OCI-LY7 (cell line): ENCODE measurements at regions of chr4 and their contacts with region 1.

Region 1: GRCh38 chr4:177250056-177250696 is 59.5 kb upstream of the NEIL3 start:
- DNase-seq: peak; percentile 54
- H3K4me3 ChIP-seq: no peak overlapping the region
- H3K27ac ChIP-seq: no peak overlapping the region
- H3K4me1 ChIP-seq: no peaks in the 10 kb centered on the region
- CTCF ChIP-seq: peak; percentile 90

Region 2: GRCh38 chr4:176875446-176875930 is 374.7 kb before region 1 on chr4:
- CTCF ChIA-PET with region 1: no interaction called
- POLR2A ChIA-PET with region 1: no interaction called
- intact Hi-C with region 1: no loop called
- DNase-seq: no peak
- H3K4me3 ChIP-seq: no peak overlapping the region
- H3K27ac ChIP-seq: no peak overlapping the region
- H3K4me1 ChIP-seq: no peaks in the 10 kb centered on the region
- CTCF ChIP-seq: no peak

Region 3: GRCh38 chr4:177339477-177340374 is 89.5 kb after region 1 on chr4:
- CTCF ChIA-PET with region 1: no interaction called
- POLR2A ChIA-PET with region 1: no interaction called
- intact Hi-C with region 1: loop called (anchors 1 kb)
- DNase-seq: peak; percentile 39
- H3K4me3 ChIP-seq: no peak overlapping the region
- H3K27ac ChIP-seq: no peak overlapping the region
- H3K4me1 ChIP-seq: no peaks in the 10 kb centered on the region
- CTCF ChIP-seq: peak; percentile 83

Region 4: GRCh38 chr4:177546745-177547144 is 296.6 kb after region 1 on chr4:
- CTCF ChIA-PET with region 1: no interaction called
- POLR2A ChIA-PET with region 1: no interaction called
- intact Hi-C with region 1: loop called (anchors 5 kb)
- DNase-seq: no peak
- H3K4me3 ChIP-seq: no peak overlapping the region
- H3K27ac ChIP-seq: no peak overlapping the region
- H3K4me1 ChIP-seq: no peaks in the 10 kb centered on the region
- CTCF ChIP-seq: 0 out of 2 replicates have a peak, but pooled peaks have one; percentile 12